Esophagus squamous epithelium (tissue), 5 donors: ENCODE measurements at regions of chr10 and their contacts with region 1.

Region 1: GRCh38 chr10:68156373-68157185 is 47.3 kb downstream of the MYPN start:
- DNase-seq: no peak
- H3K4me3 ChIP-seq: no peak overlapping the region
- H3K27ac ChIP-seq: no peak overlapping the region
- H3K4me1 ChIP-seq: peaks cover 0 to 15% (median 3%) of the 10 kb centered on the region in 3 donors
- H3K27me3 ChIP-seq: no peaks in the 10 kb centered on the region
- CTCF ChIP-seq: peak; percentile 63 to 90 (median 86)
- POLR2A ChIP-seq: no peak

Region 2: GRCh38 chr10:67858971-67859370 is 297.6 kb before region 1 on chr10:
- intact Hi-C with region 1: loop called (anchors 5 kb)
- DNase-seq: no peak
- H3K4me3 ChIP-seq: no peak overlapping the region
- H3K27ac ChIP-seq: no peak overlapping the region
- H3K4me1 ChIP-seq: no peaks in the 10 kb centered on the region
- H3K27me3 ChIP-seq: no peaks in the 10 kb centered on the region
- CTCF ChIP-seq: no peak
- POLR2A ChIP-seq: no peak

Region 3: DNA sequence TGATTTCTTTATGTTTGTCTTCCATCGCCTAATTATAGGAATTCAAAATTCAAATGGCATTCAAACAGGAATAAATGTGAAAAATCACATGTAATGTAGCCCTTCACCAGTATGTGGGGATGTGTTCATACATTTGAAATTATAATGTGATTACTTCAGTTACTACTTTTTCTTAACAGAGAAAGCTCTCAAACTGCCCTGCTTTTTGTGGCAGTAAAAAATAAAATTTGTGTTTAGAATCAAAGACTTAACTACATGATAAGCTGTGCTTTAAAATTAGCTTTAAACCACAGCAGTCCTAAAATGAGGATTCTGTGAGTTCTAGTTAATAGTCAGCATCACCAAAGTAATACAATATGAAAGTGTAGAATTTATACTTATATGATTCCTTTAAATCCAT is 73.7 kb before region 1 on chr10:
- intact Hi-C with region 1: loop called (anchors 10 kb)
- DNase-seq: no peak
- H3K4me3 ChIP-seq: no peak overlapping the region
- H3K27ac ChIP-seq: no peak overlapping the region
- H3K4me1 ChIP-seq: peaks cover 0 to 7% (median 3%) of the 10 kb centered on the region in 3 donors
- H3K27me3 ChIP-seq: no peaks in the 10 kb centered on the region
- CTCF ChIP-seq: peak in 5 of 6 experiments; percentile 29 to 60 (median 35)
- POLR2A ChIP-seq: no peak

Region 4: GRCh38 chr10:68095176-68095575 is 61.4 kb before region 1 on chr10:
- intact Hi-C with region 1: no loop called
- DNase-seq: no peak
- H3K4me3 ChIP-seq: no peak overlapping the region
- H3K27ac ChIP-seq: no peak overlapping the region
- H3K4me1 ChIP-seq: peaks cover 0 to 27% (median 0%) of the 10 kb centered on the region in 3 donors
- H3K27me3 ChIP-seq: no peaks in the 10 kb centered on the region
- CTCF ChIP-seq: no peak
- POLR2A ChIP-seq: no peak

Region 5: GRCh38 chr10:68192113-68192512 is 35.5 kb after region 1 on chr10:
- intact Hi-C with region 1: no loop called
- DNase-seq: no peak
- H3K4me3 ChIP-seq: no peak overlapping the region
- H3K27ac ChIP-seq: no peak overlapping the region
- H3K4me1 ChIP-seq: no peaks in the 10 kb centered on the region
- H3K27me3 ChIP-seq: no peaks in the 10 kb centered on the region
- CTCF ChIP-seq: no peak
- POLR2A ChIP-seq: no peak